Activated naive CD4-positive, alpha-beta T cell treated with anti-CD3 and anti-CD28 coated beads for 36 hours (primary cell): ENCODE measurements at regions of chr20 and their contacts with region 1.

Region 1: GRCh38 chr20:38446441-38447209 is 11.5 kb upstream of the SNHG17 start:
- DNase-seq: peak; percentile 95
- H3K4me3 Mint-ChIP-seq: peak overlapping the region; percentile 80
- H3K27ac Mint-ChIP-seq: peak overlapping the region; percentile 84
- H3K4me1 Mint-ChIP-seq: peaks cover 42% of the 10 kb centered on the region
- H3K27me3 Mint-ChIP-seq: peaks cover 3% of the 10 kb centered on the region

Region 2: DNA sequence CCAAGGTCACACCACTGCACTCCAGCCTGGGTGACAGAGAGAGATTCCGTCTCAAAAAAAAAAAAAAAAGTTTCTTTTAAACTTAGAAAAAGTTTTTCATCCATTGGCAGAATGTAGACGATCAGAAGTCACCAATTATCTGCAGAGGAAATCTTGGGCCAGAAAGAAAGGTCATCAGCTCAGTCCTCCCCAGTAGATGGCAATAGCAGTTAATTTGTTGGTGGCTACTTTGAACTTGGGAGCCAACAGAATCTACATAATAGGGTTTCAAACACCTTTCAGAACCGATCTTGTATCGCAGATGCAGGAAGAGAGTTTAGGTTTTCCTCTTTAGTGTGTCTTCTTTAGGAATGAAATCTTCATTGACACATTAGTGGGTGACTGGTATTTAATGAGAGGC is 58.7 kb before region 1 on chr20:
- CTCF ChIA-PET with region 1: no interaction called
- intact Hi-C with region 1: loop called (anchors 10 kb)
- DNase-seq: no peak
- H3K4me3 Mint-ChIP-seq: no peak overlapping the region
- H3K27ac Mint-ChIP-seq: no peak overlapping the region
- H3K4me1 Mint-ChIP-seq: no peaks in the 10 kb centered on the region
- H3K27me3 Mint-ChIP-seq: peaks cover 12% of the 10 kb centered on the region

Region 3: DNA sequence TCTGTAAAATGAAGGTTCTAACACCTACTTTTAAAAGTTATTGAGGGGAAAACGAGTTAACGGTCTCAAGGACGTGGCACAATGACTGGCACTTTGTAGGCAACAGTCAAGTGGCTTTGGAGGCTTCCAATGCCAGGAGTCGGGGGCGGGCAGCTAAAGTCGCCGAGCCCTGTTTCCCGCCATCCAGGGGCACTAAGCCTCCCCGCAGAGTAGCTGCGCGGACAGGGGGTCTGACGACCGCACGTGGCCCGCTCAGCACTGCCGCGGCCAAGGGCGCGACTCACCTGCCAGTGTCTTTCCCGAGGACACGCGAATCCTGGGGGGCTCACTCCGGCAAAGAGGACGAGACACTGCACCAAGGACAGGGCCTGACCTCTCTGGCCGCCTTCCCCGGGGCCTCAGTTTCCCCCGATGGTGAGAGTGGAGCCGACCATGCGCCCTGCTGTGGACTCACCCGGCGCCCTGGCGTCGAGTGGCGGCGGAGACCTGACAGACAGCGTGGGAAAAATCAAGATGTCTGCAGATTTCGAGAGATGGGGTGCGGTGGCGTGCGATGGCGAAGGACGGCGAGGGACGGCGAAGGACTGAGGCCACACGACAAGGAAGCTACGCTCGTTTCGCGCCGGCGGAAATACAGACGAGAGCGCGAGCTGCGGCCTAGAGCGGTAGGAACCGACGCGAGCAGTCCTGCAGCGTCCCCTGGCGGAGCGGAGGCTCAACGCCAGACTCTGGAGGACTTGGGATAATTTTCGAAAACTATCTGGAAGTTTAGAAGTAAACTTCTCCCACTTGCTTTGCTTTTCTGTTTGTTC is 11.7 kb before region 1 on chr20 and contains the start of gene SNHG17:
- CTCF ChIA-PET with region 1: interaction called, 52 read pairs
- intact Hi-C with region 1: loop called (anchors 1 kb)
- DNase-seq: peak; percentile 91
- H3K4me3 Mint-ChIP-seq: peak within 1 kb of the TSS; percentile 89
- H3K27ac Mint-ChIP-seq: peak within 1 kb of the TSS; percentile 97
- H3K4me1 Mint-ChIP-seq: peaks cover 40% of the 10 kb centered on the region
- H3K27me3 Mint-ChIP-seq: no peaks in the 10 kb centered on the region
- total RNA-seq, gene SNHG17: 69.1 to 72.9 TPM

Region 4: GRCh38 chr20:38617011-38617829 is 170.6 kb after region 1 on chr20:
- CTCF ChIA-PET with region 1: no interaction called
- intact Hi-C with region 1: no loop called
- DNase-seq: no peak
- H3K4me3 Mint-ChIP-seq: no peak overlapping the region
- H3K27ac Mint-ChIP-seq: no peak overlapping the region
- H3K4me1 Mint-ChIP-seq: no peaks in the 10 kb centered on the region
- H3K27me3 Mint-ChIP-seq: peaks cover 11% of the 10 kb centered on the region

Region 5: GRCh38 chr20:38805502-38805957 is 358.9 kb after region 1 on chr20 and contains the start of gene PPP1R16B:
- CTCF ChIA-PET with region 1: no interaction called
- intact Hi-C with region 1: no loop called
- DNase-seq: peak; percentile 76
- H3K4me3 Mint-ChIP-seq: peak within 1 kb of the TSS; percentile 85
- H3K27ac Mint-ChIP-seq: peak within 1 kb of the TSS; percentile 96
- H3K4me1 Mint-ChIP-seq: peaks cover 47% of the 10 kb centered on the region
- H3K27me3 Mint-ChIP-seq: no peaks in the 10 kb centered on the region
- total RNA-seq, gene PPP1R16B: 38.1 to 40.0 TPM